ENCODE measurements at regions of chr14 and their contacts with region 1.

Region 1: DNA sequence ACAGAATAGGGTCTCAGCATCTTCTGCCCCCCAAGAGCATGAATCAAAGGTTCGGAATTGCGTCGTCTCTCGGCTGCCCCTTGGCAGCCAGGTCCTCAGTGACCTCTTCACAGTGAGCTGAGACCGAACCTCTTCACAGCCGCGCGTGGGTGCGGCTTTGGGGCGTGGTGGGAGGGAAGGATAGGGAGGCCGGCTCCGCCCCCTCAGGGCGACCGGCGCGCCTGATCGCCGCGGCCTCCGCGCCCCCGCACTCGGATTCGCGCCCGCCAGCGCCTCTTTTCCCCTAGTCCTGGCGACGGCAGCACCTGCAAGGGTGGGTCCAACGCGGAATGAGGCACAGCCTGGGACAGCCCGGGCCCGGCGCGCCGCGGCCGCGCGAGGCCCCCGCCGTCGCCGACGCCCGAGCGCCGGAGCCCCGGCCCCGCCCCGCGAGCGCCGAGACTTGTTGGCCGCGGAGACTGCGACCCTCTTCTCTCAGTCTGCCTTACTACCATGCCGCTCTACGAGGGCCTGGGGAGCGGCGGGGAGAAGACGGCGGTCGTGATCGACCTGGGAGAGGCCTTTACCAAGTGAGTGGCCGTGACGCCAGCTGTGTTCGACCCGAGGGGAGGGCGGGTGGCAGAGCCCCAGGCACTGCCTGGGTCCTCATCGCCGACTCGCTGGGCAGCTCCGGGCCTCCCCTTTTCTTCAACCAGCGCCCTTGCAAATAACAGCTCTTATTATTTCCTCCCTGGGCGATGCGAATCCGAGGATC is at the start of gene ACTR10:
- DNase-seq: peak; percentile 93
- ATAC-seq: peak; percentile 93
- H3K4me3 Mint-ChIP-seq: peak within 1 kb of the TSS; percentile 97
- H3K27ac Mint-ChIP-seq: peak within 1 kb of the TSS; percentile 92
- H3K4me1 Mint-ChIP-seq: peaks cover 38% of the 10 kb centered on the region
- H3K27me3 Mint-ChIP-seq: no peaks in the 10 kb centered on the region
- total RNA-seq, gene ACTR10: 31.2 to 32.3 TPM

Region 2: GRCh38 chr14:57390028-57390805 is 809.7 kb before region 1 on chr14 and contains the start of gene NAA30:
- CTCF ChIA-PET with region 1: no interaction called
- POLR2A ChIA-PET with region 1: no interaction called
- intact Hi-C with region 1: loop called in 1 of 2 experiments (anchors 2 kb)
- DNase-seq: peak; percentile 96
- ATAC-seq: peak; percentile 91
- H3K4me3 Mint-ChIP-seq: peak within 1 kb of the TSS; percentile 81
- H3K27ac Mint-ChIP-seq: peak within 1 kb of the TSS; percentile 93
- H3K4me1 Mint-ChIP-seq: peaks cover 37% of the 10 kb centered on the region
- H3K27me3 Mint-ChIP-seq: no peaks in the 10 kb centered on the region
- total RNA-seq, gene NAA30: 14.2 to 17.6 TPM

Region 3: DNA sequence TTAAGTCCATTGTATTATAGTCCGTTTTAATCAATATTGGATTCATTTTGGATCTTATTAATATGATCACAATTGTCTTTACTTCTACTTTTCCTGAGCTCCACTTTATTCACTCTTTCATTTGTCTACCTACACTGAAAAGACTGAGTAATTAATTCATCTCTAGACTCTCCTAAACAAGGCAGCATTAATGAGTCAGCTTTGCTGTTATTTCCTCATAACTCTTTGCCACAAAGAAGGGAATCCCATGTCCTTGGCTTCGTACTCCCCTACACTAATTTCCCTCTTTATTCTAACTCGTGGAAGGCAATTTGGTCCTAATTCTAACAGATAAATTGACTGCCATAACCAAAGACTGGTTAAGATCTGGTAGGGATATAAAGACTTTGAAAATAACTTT is 139.8 kb before region 1 on chr14:
- CTCF ChIA-PET with region 1: no interaction called
- POLR2A ChIA-PET with region 1: no interaction called
- intact Hi-C with region 1: no loop called
- DNase-seq: no peak
- ATAC-seq: no peak
- H3K4me3 Mint-ChIP-seq: no peak overlapping the region
- H3K27ac Mint-ChIP-seq: no peak overlapping the region
- H3K4me1 Mint-ChIP-seq: no peaks in the 10 kb centered on the region
- H3K27me3 Mint-ChIP-seq: peaks cover 13% of the 10 kb centered on the region

Region 4: DNA sequence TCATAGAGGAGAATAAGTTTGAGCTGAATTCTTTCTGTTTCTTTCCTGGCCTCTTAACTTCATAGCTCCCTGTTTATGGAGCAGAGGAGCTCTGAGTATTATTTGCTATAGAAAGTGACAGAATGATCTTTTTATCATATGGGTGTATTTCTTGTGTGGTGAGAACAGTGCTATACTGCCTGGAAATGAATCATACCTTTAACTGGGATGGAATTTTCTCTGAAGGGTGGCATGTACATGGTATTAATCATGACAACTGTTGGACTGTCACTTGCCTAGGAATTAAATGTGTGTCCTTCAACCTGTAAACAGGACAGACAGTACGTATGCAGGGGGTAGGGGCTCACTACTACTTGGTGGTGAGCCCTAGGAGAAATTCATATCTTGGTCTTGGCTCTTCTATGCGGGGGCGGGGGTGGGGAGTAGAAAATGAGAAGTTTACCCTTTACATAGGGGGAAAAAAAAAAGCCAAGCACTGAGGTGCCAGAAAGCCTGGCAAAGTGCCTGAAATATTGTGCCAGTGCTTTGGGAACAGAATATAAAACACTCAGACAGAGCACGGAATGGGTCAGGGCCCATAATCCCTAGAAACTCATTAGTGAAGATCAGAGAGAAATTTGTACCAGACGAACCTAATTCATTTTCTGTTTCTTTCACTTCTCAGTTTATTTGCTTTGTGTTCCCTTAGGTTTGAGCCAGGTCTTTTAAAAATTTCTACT is 81.6 kb before region 1 on chr14:
- CTCF ChIA-PET with region 1: no interaction called
- POLR2A ChIA-PET with region 1: no interaction called
- intact Hi-C with region 1: no loop called
- DNase-seq: no peak
- ATAC-seq: no peak
- H3K4me3 Mint-ChIP-seq: no peak overlapping the region
- H3K27ac Mint-ChIP-seq: no peak overlapping the region
- H3K4me1 Mint-ChIP-seq: no peaks in the 10 kb centered on the region
- H3K27me3 Mint-ChIP-seq: peaks cover 25% of the 10 kb centered on the region

Region 5: GRCh38 chr14:58152014-58152857 is 47.7 kb before region 1 on chr14 and contains the start of gene ARMH4:
- CTCF ChIA-PET with region 1: no interaction called
- POLR2A ChIA-PET with region 1: no interaction called
- intact Hi-C with region 1: loop called in 1 of 2 experiments (anchors 1 kb)
- DNase-seq: peak; percentile 80
- ATAC-seq: peak; percentile 93
- H3K4me3 Mint-ChIP-seq: peak within 1 kb of the TSS; percentile 65
- H3K27ac Mint-ChIP-seq: no peak within 1 kb of the TSS
- H3K4me1 Mint-ChIP-seq: peaks cover 16% of the 10 kb centered on the region
- H3K27me3 Mint-ChIP-seq: peaks cover 53% of the 10 kb centered on the region
- total RNA-seq, gene ARMH4: not detected

Region 6: GRCh38 chr14:58239244-58240195 is 39.6 kb after region 1 on chr14:
- CTCF ChIA-PET with region 1: no interaction called
- POLR2A ChIA-PET with region 1: no interaction called
- intact Hi-C with region 1: loop called (anchors 1 kb)
- DNase-seq: peak; percentile 87
- ATAC-seq: peak; percentile 6
- H3K4me3 Mint-ChIP-seq: no peak overlapping the region
- H3K27ac Mint-ChIP-seq: no peak overlapping the region
- H3K4me1 Mint-ChIP-seq: peaks cover 21% of the 10 kb centered on the region
- H3K27me3 Mint-ChIP-seq: no peaks in the 10 kb centered on the region

Measured in activated CD4-positive, alpha-beta T cell treated with anti-CD3 and anti-CD28 coated beads for 36 hours (primary cell).